GM10248 (cell line): ENCODE measurements at regions of chr3 and their contacts with region 1.

Region 1: DNA sequence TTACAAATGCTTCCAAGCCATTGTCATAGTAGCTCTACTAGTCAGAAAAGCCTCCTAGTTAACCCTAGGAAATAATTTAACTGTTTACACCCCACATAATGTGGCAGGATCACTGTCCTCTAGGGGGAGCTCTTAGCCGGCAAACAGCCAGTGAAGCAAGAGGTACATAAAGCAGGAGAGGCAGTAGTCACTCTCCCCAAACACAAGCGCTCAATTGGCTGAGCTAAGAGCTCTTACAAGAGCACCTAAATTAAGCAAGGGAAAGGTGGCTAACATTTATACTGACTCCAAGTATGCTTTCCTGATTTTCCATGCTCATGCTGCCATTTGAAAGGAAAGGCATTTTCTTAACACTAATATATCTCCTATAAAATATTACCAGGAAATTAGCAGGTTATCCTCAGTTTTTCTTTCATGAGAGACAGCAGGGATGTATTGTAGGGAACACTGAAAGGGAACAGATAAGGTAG is 37.6 kb downstream of the NCEH1 start:
- DNase-seq: peak; percentile 50
- CTCF ChIP-seq: peak; percentile 81

Region 2: GRCh38 chr3:172332256-172333041 is 340.8 kb before region 1 on chr3:
- CTCF ChIA-PET with region 1: interaction called, 24 read pairs
- POLR2A ChIA-PET with region 1: no interaction called
- DNase-seq: peak; percentile 67
- CTCF ChIP-seq: peak; percentile 91

Region 3: GRCh38 chr3:172607305-172608121 is 65.7 kb before region 1 on chr3:
- CTCF ChIA-PET with region 1: interaction called, 11 read pairs
- POLR2A ChIA-PET with region 1: no interaction called
- DNase-seq: no peak
- CTCF ChIP-seq: no peak

Region 4: GRCh38 chr3:172658344-172659245 is 14.7 kb before region 1 on chr3:
- CTCF ChIA-PET with region 1: interaction called, 11 read pairs
- POLR2A ChIA-PET with region 1: no interaction called
- DNase-seq: no peak
- CTCF ChIP-seq: no peak

Region 5: GRCh38 chr3:172692751-172693338 is 19.6 kb after region 1 on chr3:
- CTCF ChIA-PET with region 1: interaction called, 49 read pairs
- POLR2A ChIA-PET with region 1: no interaction called
- DNase-seq: peak; percentile 27
- CTCF ChIP-seq: no peak

Region 6: GRCh38 chr3:172710664-172711453 is 37.6 kb after region 1 on chr3 and contains the start of gene NCEH1:
- CTCF ChIA-PET with region 1: interaction called, 15 read pairs
- POLR2A ChIA-PET with region 1: no interaction called
- DNase-seq: peak; percentile 91
- CTCF ChIP-seq: peak; percentile 83

Region 7: DNA sequence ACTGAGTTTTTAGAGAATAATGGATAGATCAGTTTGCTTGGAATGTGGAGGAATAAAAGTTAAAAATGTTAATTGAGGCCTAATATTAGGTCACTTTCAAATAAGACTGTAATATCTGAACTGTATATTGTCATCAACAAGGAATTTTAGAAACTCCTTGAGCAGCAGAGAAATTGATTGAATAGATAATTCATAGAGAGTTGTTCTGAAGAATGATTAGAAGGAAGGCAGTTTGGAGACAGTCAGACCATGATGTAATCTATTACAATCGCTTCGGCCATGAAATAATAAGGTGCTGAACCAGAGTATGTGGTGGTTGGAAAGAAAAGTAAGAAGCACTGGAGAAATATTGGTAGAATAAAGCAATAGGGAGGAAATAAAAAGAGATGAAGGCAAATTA is 93.0 kb after region 1 on chr3:
- CTCF ChIA-PET with region 1: no interaction called
- POLR2A ChIA-PET with region 1: no interaction called
- DNase-seq: no peak
- CTCF ChIP-seq: no peak